Gastrocnemius medialis (tissue), 4 donors: ENCODE measurements at regions of chr20 and their contacts with region 1.

Region 1: DNA sequence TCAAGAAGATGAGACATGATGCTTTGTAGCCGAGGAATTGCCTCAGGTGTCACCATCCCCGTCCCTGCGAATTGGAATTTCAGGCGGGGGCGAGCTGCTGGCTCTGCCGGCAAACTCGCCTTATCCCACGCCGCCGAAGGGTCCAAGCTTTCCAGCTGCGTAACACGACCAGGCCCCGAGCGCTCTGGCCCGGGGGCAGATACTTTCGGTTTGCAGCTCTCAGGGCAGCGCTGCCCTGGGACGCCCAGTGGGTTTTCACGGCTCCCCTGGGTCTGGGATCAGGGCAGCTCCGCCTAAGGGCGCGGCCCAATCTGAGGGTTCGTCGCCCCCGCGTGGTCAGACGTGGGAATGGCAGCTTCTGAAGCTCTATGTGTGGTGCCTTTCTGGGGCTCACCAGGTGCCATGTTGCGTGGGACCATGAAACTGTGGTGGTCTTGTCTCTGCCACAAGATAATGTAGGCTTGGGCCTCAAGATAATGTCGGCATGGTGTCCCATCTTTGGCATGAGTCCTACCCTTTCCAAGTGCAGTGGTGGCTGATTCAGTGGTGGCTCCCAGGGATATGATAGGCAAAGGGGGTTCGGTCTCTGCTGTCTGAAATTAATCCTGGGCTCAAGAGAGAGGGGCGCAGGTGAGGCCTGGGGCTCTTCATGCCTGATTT is 20.9 kb downstream of the PIGT start:
- DNase-seq: peak; percentile 64 to 87
- ATAC-seq: peak; percentile 94 to 96
- H3K4me3 ChIP-seq: peak overlapping the region; percentile 60 to 82 (median 74)
- H3K27ac ChIP-seq: peak overlapping the region; percentile 81 to 86 (median 84)
- H3K4me1 ChIP-seq: peaks cover 4 to 6% of the 10 kb centered on the region in 2 donors
- H3K27me3 ChIP-seq: no peaks in the 10 kb centered on the region
- CTCF ChIP-seq: peak; percentile 94 to 98 (median 97)
- POLR2A ChIP-seq: no peak

Region 2: DNA sequence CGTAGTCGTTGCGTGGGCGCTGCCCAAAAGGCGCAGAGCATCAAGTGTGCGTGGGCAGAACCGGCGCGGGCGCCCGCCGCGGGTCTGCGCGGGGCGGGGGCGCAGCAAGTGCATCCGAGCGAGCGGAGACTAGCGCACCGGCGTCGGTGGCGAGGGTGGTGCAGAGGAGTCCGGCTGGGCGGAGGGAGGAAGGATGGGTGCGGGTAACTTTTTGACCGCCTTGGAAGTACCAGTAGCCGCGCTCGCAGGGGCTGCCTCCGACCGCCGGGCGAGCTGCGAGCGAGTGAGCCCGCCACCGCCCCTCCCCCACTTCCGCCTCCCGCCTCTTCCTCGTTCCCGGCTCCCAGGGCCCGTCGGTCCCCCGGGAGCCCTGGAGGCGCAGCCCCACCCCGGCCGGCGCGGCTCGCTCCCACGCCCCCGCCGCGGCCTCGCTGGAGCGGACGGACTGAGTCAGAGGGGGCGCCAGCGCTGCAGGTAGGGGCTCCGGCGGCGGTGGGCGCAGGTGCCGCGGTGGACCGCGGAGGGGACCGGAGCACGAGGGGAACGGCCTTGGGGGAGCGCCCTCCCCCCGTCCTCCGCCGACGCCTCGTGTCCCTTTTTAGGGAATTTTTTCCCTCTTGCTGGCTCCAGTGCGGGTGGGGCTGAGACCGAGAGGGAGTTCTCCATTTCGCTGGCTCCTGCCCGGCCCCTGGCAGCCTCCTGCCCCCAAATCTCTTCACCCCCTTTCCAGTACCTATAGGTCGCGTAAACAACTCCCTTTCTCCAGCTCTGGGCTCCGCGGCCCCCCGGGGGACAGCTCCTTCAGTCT is 30.4 kb before region 1 on chr20:
- in situ Hi-C with region 1: no loop called
- intact Hi-C with region 1: loop called (anchors 1 kb)
- DNase-seq: peak; percentile 49 to 62
- ATAC-seq: peak; percentile 70 to 73
- H3K4me3 ChIP-seq: peak overlapping the region; percentile 87 to 96 (median 91)
- H3K27ac ChIP-seq: peak overlapping the region; percentile 96 to 100 (median 98)
- H3K4me1 ChIP-seq: peaks cover 40 to 42% of the 10 kb centered on the region in 2 donors
- H3K27me3 ChIP-seq: no peaks in the 10 kb centered on the region
- CTCF ChIP-seq: no peak
- POLR2A ChIP-seq: peak; percentile 55 to 62